K562 (cell line): ENCODE measurements at regions of chr22 and their contacts with region 1.

Region 1: GRCh38 chr22:22959147-22959827 is 71.7 kb downstream of the IGLL5 start:
- DNase-seq: peak; percentile 98 to 99 (median 99)
- ATAC-seq: peak; percentile 85
- H3K4me3 ChIP-seq: no peak overlapping the region
- H3K27ac ChIP-seq: no peak overlapping the region
- H3K4me1 ChIP-seq: no peaks in the 10 kb centered on the region
- H3K27me3 ChIP-seq: peaks cover 3 to 6% of the 10 kb centered on the region in 2 experiments; a peak in 3 of 5 replicates
- CTCF ChIP-seq: no peak
- EP300 ChIP-seq: no peak
- POLR2A ChIP-seq: no peak
- RAD21 ChIP-seq: no peak

Region 2: GRCh38 chr22:22593964-22594656 is 365.2 kb before region 1 on chr22:
- CTCF ChIA-PET with region 1: interaction called, 17 read pairs
- POLR2A ChIA-PET with region 1: no interaction called
- in situ Hi-C with region 1: no loop called
- intact Hi-C with region 1: loop called (anchors 2 kb)
- DNase-seq: peak; percentile 94 to 100 (median 98)
- ATAC-seq: peak; percentile 95
- H3K4me3 ChIP-seq: no peak overlapping the region
- H3K27ac ChIP-seq: no peak overlapping the region
- H3K4me1 ChIP-seq: no peaks in the 10 kb centered on the region
- H3K27me3 ChIP-seq: peaks cover 31 to 47% of the 10 kb centered on the region in 2 experiments; a peak in 4 of 5 replicates
- CTCF ChIP-seq: no peak
- EP300 ChIP-seq: no peak
- POLR2A ChIP-seq: no peak
- RAD21 ChIP-seq: no peak

Region 3: GRCh38 chr22:22787786-22788459 is 171.4 kb before region 1 on chr22:
- CTCF ChIA-PET with region 1: interaction called, 47 read pairs
- POLR2A ChIA-PET with region 1: interaction called, 7 read pairs
- in situ Hi-C with region 1: no loop called
- intact Hi-C with region 1: loop called (anchors 1 kb)
- DNase-seq: peak; percentile 97 to 100 (median 99)
- ATAC-seq: peak; percentile 96
- H3K4me3 ChIP-seq: no peak overlapping the region
- H3K27ac ChIP-seq: no peak overlapping the region
- H3K4me1 ChIP-seq: peaks cover 0 to 3% of the 10 kb centered on the region in 2 experiments; a peak in 1 of 5 replicates
- H3K27me3 ChIP-seq: peaks cover 26 to 30% of the 10 kb centered on the region in 2 experiments; a peak in 4 of 5 replicates
- CTCF ChIP-seq: no peak
- EP300 ChIP-seq: no peak
- POLR2A ChIP-seq: no peak
- RAD21 ChIP-seq: no peak

Region 4: DNA sequence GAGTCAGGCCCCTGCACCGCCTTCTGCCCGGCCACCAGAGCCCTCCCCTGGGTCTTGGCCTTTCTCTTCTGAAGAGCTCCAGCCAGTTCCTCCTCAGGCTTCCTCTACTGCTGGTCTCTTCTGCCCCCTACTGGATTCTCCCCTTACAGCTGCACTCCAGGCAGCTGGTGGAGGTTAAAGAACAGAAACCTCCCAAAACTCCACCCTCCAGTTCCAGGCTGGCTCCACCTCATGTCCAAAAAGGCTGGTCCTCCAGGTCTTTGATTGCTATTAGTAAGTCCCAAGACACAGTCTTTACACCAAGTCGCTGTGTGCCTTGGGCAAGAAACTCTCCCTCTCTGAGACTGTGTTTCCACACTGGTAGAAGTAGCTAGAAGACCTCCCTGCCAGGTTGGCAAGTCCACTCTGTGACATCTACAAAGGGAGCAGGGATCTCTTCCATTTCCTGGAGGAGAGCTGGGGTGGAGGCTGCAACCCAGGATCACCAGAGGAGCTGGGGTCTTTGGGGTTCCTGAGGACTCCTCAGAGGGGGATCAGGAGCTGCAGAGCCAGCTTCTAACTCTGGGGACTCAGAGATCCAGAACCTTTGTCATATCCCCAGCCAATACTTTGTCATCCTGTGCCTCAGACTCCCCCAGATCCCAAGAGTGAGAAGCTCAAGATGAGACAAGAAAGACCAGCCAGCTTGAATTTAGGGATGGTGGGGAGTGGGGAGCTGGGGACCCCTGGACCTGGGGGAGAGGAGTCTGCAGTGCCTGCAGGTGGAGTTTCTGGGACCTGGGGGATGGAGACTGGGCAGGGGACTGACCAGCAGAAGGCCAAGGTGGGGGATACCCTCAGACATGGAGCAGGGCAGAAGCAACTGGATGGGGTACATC is 75.0 kb before region 1 on chr22:
- CTCF ChIA-PET with region 1: interaction called, 21 read pairs
- POLR2A ChIA-PET with region 1: interaction called, 3 read pairs
- in situ Hi-C with region 1: no loop called
- intact Hi-C with region 1: loop called (anchors 2 kb)
- DNase-seq: peak; percentile 57 to 100 (median 78)
- ATAC-seq: peak; percentile 94
- H3K4me3 ChIP-seq: no peak overlapping the region
- H3K27ac ChIP-seq: no peak overlapping the region
- H3K4me1 ChIP-seq: peaks cover 0 to 9% of the 10 kb centered on the region in 2 experiments; a peak in 1 of 5 replicates
- H3K27me3 ChIP-seq: peaks cover 0 to 46% of the 10 kb centered on the region in 2 experiments; a peak in 2 of 5 replicates
- CTCF ChIP-seq: no peak
- EP300 ChIP-seq: no peak
- POLR2A ChIP-seq: no peak
- RAD21 ChIP-seq: no peak

Region 5: DNA sequence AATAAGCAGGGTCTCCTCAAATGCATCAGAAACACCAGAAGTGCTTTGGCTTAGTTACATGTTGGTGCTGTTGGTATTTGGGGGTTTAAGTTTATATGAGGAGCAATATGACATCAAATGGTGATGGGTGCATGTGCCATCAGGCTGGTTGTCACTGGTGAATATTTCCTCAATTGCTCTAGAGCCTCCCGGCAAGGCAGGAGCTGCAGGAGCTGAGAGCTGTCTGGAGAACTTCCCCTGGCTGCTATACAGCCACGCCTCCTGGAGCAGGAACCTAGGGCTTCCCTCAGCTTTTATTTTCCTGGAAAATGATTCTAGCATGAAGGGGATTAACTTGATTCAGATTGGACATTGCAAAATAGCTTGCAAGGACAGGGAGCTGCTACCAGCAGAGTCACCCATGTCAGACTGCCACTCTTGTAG is 55.9 kb before region 1 on chr22:
- CTCF ChIA-PET with region 1: no interaction called
- POLR2A ChIA-PET with region 1: no interaction called
- in situ Hi-C with region 1: no loop called
- intact Hi-C with region 1: no loop called
- DNase-seq: peak in 3 of 4 experiments; percentile 53 to 59 (median 53)
- ATAC-seq: no peak
- H3K4me3 ChIP-seq: no peak overlapping the region
- H3K27ac ChIP-seq: no peak overlapping the region
- H3K4me1 ChIP-seq: no peaks in the 10 kb centered on the region
- H3K27me3 ChIP-seq: peaks cover 37 to 44% of the 10 kb centered on the region in 2 experiments; a peak in 4 of 5 replicates
- CTCF ChIP-seq: no peak
- EP300 ChIP-seq: no peak
- POLR2A ChIP-seq: no peak
- RAD21 ChIP-seq: no peak

Region 6: GRCh38 chr22:23128269-23129108 is 169.2 kb after region 1 on chr22:
- CTCF ChIA-PET with region 1: interaction called, 549 read pairs
- POLR2A ChIA-PET with region 1: interaction called, 51 read pairs
- in situ Hi-C with region 1: no loop called
- intact Hi-C with region 1: loop called (anchors 1 kb)
- DNase-seq: peak; percentile 61 to 98 (median 62)
- ATAC-seq: peak; percentile 91
- H3K4me3 ChIP-seq: no peak overlapping the region
- H3K27ac ChIP-seq: no peak overlapping the region
- H3K4me1 ChIP-seq: peaks cover 0 to 9% of the 10 kb centered on the region in 2 experiments; a peak in 2 of 5 replicates
- H3K27me3 ChIP-seq: peaks cover 53 to 79% of the 10 kb centered on the region in 2 experiments
- CTCF ChIP-seq: peak in 1 of 3 experiments; percentile 100; a peak in 2 of 6 replicates
- EP300 ChIP-seq: peak; percentile 83
- POLR2A ChIP-seq: no peak
- RAD21 ChIP-seq: peak in 1 of 2 experiments; percentile 100; a peak in 2 of 4 replicates

Region 7: GRCh38 chr22:23163665-23164064 is 204.4 kb after region 1 on chr22:
- CTCF ChIA-PET with region 1: no interaction called
- POLR2A ChIA-PET with region 1: no interaction called
- in situ Hi-C with region 1: no loop called
- intact Hi-C with region 1: no loop called
- DNase-seq: no peak
- ATAC-seq: no peak
- H3K4me3 ChIP-seq: no peak overlapping the region
- H3K27ac ChIP-seq: no peak overlapping the region
- H3K4me1 ChIP-seq: peaks cover 0 to 10% of the 10 kb centered on the region in 2 experiments; a peak in 3 of 5 replicates
- H3K27me3 ChIP-seq: peaks cover 76 to 89% of the 10 kb centered on the region in 2 experiments
- CTCF ChIP-seq: no peak
- EP300 ChIP-seq: no peak
- POLR2A ChIP-seq: no peak
- RAD21 ChIP-seq: no peak

Region 8: DNA sequence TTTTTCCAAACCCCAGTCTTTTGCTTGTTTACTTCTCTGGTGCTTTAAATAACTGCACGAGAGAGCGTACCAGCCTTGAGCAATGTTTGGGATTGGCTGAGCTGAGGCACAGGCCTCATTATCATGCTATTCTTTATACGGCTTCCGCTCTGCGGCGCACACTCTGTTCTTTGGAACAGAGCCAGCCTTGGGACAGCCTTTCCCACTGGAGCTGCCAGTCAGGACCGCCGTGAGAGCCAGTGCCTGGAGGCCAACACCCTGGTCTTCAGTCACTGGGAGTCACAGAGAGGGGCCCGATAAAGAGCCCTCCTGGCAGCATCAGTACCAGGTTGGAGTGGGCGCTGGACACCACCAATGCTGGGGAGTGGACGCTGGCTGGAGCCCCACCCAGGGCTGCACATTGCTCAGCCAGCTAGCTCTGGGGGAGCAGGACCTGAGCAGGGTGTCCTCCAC is 346.7 kb after region 1 on chr22:
- CTCF ChIA-PET with region 1: no interaction called
- POLR2A ChIA-PET with region 1: no interaction called
- in situ Hi-C with region 1: no loop called
- intact Hi-C with region 1: no loop called
- DNase-seq: no peak
- ATAC-seq: no peak
- H3K4me3 ChIP-seq: no peak overlapping the region
- H3K27ac ChIP-seq: no peak overlapping the region
- H3K4me1 ChIP-seq: peaks cover 0 to 5% of the 10 kb centered on the region in 2 experiments; a peak in 2 of 5 replicates
- H3K27me3 ChIP-seq: no peaks in the 10 kb centered on the region
- CTCF ChIP-seq: no peak
- EP300 ChIP-seq: no peak
- POLR2A ChIP-seq: no peak
- RAD21 ChIP-seq: no peak

Region 9: DNA sequence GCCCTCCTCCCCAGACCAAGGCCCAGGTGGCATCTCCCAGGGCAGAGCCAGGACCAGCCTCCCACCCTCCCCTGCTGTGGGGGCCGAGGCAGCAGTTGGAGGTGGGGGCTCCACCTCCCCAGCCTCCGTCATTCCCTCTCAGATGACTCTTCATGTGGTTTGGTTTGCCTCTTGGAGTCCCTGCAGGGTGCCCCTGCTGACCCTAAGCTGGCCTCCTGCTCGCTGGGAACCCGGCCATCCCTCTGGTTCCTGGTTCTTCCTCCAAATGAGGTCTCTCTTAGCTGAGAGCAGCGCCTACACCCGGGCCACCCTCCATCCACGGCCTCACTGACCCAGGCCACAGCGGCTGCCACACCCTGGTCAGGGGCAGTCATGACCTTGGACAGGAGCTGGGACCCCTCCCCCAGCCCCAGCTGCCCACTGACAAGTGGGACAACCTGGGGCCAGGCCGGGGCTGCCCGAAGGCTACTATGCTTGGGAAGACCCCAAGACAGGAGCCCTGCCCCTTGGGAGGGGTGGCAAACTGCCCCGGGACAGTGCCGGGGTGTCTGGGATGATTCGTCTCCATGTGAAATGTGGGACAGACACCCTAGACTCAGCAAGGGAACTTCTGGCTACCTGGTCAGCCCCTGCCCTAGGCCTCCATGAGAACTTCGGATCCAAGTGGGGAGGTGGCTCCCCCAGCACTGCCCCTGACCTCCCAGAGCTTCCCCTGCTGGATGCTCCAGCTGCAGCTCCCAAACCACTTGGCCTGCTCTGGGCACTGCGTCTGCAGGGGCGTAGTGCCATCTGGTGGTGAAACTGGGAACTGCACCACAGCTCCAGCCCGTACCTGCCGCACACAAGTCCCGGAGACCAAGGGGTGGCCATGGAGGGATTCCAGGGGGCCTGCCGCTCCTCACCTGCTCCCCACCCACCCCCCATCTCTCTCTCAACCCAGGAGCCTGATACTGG is 426.3 kb after region 1 on chr22:
- CTCF ChIA-PET with region 1: interaction called, 6 read pairs
- POLR2A ChIA-PET with region 1: interaction called, 3 read pairs
- in situ Hi-C with region 1: loop called (anchors 25 kb)
- intact Hi-C with region 1: loop called (anchors 2 kb)
- DNase-seq: peak; percentile 74 to 82 (median 80)
- ATAC-seq: peak; percentile 95
- H3K4me3 ChIP-seq: no peak overlapping the region
- H3K27ac ChIP-seq: no peak overlapping the region
- H3K4me1 ChIP-seq: peaks cover 0 to 27% of the 10 kb centered on the region in 2 experiments; a peak in 1 of 5 replicates
- H3K27me3 ChIP-seq: peaks cover 0 to 5% of the 10 kb centered on the region in 2 experiments; a peak in 1 of 5 replicates
- CTCF ChIP-seq: peak; percentile 89 to 97 (median 93)
- EP300 ChIP-seq: no peak
- POLR2A ChIP-seq: no peak
- RAD21 ChIP-seq: peak; percentile 80 to 89